ENCODE measurements at regions of chr5 and their contacts with region 1.

Region 1: DNA sequence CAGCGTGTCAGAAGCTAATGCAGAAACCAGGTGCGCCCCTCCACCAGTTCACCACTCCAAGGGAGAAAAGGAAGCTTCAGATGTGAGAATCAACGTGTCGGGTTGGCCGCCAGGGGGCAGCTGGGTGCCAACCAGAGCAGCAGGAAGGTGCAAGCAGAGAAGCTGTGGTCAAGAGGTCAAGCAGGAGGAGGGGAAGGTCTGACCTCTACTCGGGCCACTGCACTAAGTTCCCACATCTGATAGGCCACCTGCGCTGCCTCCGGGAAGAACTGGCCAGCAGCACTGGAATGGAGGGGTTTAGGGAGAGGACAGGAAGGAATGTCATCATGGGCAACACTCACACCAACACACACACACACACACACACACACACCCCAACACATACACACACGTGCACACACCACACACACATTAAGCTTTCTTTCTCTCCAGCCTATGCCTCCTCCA is 31.4 kb downstream of the ANXA6 start:
- DNase-seq: peak; percentile 34 to 82 (median 66)
- ATAC-seq: peak; percentile 37
- H3K4me3 ChIP-seq: no peak overlapping the region
- H3K4me3 Mint-ChIP-seq: no peak overlapping the region
- H3K27ac ChIP-seq: peak overlapping the region; percentile 12 to 54
- H3K27ac Mint-ChIP-seq: peak overlapping the region; percentile 92
- H3K4me1 ChIP-seq: peaks cover 41% of the 10 kb centered on the region
- H3K4me1 Mint-ChIP-seq: peaks cover 54% of the 10 kb centered on the region
- H3K27me3 ChIP-seq: no peaks in the 10 kb centered on the region
- H3K27me3 Mint-ChIP-seq: no peaks in the 10 kb centered on the region
- CTCF ChIP-seq: peak; percentile 78

Region 2: GRCh38 chr5:151094054-151094851 is 32.0 kb before region 1 on chr5:
- CTCF ChIA-PET with region 1: interaction called, 21 read pairs
- POLR2A ChIA-PET with region 1: interaction called, 4 read pairs
- intact Hi-C with region 1: no loop called
- DNase-seq: peak in 7 of 9 experiments; percentile 27 to 86 (median 53)
- ATAC-seq: peak; percentile 50
- H3K4me3 ChIP-seq: peak overlapping the region in 1 of 2 experiments; percentile 18
- H3K4me3 Mint-ChIP-seq: peak overlapping the region; percentile 52
- H3K27ac ChIP-seq: peak overlapping the region in 1 of 2 experiments; percentile 73
- H3K27ac Mint-ChIP-seq: peak overlapping the region; percentile 89
- H3K4me1 ChIP-seq: peaks cover 53% of the 10 kb centered on the region
- H3K4me1 Mint-ChIP-seq: peaks cover 70% of the 10 kb centered on the region
- H3K27me3 ChIP-seq: no peaks in the 10 kb centered on the region
- H3K27me3 Mint-ChIP-seq: no peaks in the 10 kb centered on the region
- CTCF ChIP-seq: no peak

Region 3: DNA sequence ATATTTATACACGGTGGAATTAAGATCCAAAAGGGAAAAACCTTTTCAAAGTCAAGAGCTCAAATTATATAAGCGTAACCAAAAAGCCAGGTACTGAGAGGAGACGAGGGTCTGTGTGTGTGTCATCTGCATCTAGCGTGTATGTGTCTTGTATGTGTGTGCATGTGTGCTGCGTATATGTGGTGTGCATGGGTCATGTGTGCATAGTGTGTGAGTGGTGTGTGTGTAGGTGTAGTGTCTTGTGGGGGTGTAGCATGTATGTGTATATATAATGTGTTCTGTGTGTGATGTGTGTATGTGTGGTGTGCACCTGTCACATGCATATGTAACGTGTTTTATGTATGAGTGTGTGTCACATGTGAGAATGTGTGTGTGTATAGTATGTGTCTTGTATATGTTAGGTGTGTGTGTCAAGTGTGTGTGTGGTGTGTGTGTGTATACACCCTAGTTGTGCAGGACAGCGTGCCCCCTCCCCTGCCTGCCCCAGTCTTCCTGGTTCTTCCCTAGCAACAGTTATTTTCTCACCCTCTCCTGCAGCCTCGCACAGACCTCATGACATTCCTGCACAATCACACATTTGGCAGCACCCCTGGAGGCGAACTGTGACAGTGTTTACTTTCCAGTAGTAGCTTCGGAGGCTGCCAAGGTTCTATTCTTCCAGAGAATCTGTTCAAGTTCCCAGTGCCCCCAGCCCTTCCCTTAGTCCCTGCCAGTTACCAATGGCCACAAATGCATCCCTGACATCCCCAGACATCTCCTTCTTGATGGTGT is 18.3 kb before region 1 on chr5:
- CTCF ChIA-PET with region 1: interaction called, 142 read pairs
- POLR2A ChIA-PET with region 1: no interaction called
- intact Hi-C with region 1: no loop called
- DNase-seq: no peak
- ATAC-seq: no peak
- H3K4me3 ChIP-seq: no peak overlapping the region
- H3K4me3 Mint-ChIP-seq: no peak overlapping the region
- H3K27ac ChIP-seq: no peak overlapping the region
- H3K27ac Mint-ChIP-seq: peak overlapping the region; percentile 69
- H3K4me1 ChIP-seq: no peaks in the 10 kb centered on the region
- H3K4me1 Mint-ChIP-seq: no peaks in the 10 kb centered on the region
- H3K27me3 ChIP-seq: no peaks in the 10 kb centered on the region
- H3K27me3 Mint-ChIP-seq: no peaks in the 10 kb centered on the region
- CTCF ChIP-seq: no peak

Region 4: DNA sequence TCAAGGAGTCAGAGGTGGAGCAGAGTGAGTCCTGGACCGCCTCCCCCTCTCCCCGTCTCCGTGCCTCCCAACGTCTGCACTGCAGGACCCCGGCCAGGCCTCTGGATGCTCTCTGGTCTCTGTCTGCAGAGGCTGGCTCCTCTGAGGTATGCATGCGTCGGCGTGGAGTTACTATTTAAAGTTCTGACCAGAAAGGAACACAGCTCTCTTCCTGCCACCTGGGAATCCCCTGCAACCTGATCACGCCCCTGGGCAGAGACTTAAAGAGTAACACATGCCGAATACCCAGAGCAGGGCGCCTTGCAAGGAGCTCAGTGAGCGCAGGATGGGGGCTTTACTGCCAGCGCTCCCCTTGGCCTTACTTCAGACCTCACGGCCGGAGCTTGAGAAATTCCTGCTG is 15.3 kb after region 1 on chr5:
- CTCF ChIA-PET with region 1: interaction called, 1,723 read pairs
- POLR2A ChIA-PET with region 1: interaction called, 15 read pairs
- intact Hi-C with region 1: loop called in 1 of 2 experiments (anchors 2 kb)
- DNase-seq: peak in 8 of 9 experiments; percentile 42 to 85 (median 69)
- ATAC-seq: peak; percentile 51
- H3K4me3 ChIP-seq: peak overlapping the region; percentile 10 to 43
- H3K4me3 Mint-ChIP-seq: peak overlapping the region; percentile 82
- H3K27ac ChIP-seq: peak overlapping the region; percentile 26 to 90
- H3K27ac Mint-ChIP-seq: peak overlapping the region; percentile 95
- H3K4me1 ChIP-seq: peaks cover 93% of the 10 kb centered on the region
- H3K4me1 Mint-ChIP-seq: peaks cover 98% of the 10 kb centered on the region
- H3K27me3 ChIP-seq: no peaks in the 10 kb centered on the region
- H3K27me3 Mint-ChIP-seq: no peaks in the 10 kb centered on the region
- CTCF ChIP-seq: no peak

Region 5: DNA sequence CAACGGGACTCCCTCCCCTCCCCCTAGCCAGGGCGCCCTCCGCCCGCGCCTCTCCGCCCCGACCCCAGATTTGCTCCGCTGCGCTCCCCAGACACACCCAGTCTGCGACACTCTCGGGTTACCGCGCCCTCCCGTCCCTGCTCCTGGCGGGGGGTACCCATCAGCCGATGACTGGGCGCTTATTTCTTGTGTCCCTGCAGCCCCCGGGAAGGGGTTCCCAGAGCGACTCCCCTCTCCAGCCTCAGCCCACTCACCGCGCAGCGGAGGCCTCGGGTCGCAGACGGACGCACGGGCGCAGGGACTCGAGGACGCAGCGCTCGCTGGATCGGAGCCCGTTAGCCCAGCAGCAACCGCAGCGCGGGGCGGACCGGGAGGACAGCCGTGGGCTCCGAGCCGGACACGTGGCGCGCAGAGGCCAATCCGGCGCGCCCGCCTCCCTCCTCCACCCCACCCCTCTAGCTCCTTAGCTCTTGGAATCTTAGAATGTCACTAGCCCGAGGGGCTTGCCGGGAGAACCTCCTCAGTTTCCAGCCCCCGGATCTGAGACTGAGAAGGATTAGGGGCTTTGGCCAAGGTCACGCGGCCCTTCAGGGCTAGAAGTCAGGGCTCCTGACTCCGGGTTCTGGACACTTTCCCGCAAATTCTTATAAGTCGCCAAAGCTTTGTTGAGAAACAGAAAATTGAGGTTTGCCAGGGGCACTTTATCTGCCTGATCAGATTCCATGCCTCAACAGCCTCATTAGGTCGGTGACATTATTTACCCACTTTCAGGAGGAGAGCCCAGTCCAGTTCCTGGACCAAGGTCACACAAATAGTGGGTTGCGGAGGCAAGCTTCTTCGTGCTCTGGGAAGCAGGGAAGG is 31.4 kb after region 1 on chr5 and contains the start of gene ANXA6:
- CTCF ChIA-PET with region 1: interaction called, 1,723 read pairs
- POLR2A ChIA-PET with region 1: interaction called, 13 read pairs
- intact Hi-C with region 1: no loop called
- DNase-seq: peak in 8 of 9 experiments; percentile 50 to 86 (median 66)
- ATAC-seq: peak; percentile 70
- H3K4me3 ChIP-seq: peak within 1 kb of the TSS; percentile 52 to 94
- H3K4me3 Mint-ChIP-seq: peak within 1 kb of the TSS; percentile 97
- H3K27ac ChIP-seq: peak within 1 kb of the TSS; percentile 68 to 90
- H3K27ac Mint-ChIP-seq: peak within 1 kb of the TSS; percentile 95
- H3K4me1 ChIP-seq: peaks cover 43% of the 10 kb centered on the region
- H3K4me1 Mint-ChIP-seq: peaks cover 65% of the 10 kb centered on the region
- H3K27me3 ChIP-seq: no peaks in the 10 kb centered on the region
- H3K27me3 Mint-ChIP-seq: no peaks in the 10 kb centered on the region
- CTCF ChIP-seq: no peak
- total RNA-seq, gene ANXA6: 83.5 to 89.4 TPM

Region 6: DNA sequence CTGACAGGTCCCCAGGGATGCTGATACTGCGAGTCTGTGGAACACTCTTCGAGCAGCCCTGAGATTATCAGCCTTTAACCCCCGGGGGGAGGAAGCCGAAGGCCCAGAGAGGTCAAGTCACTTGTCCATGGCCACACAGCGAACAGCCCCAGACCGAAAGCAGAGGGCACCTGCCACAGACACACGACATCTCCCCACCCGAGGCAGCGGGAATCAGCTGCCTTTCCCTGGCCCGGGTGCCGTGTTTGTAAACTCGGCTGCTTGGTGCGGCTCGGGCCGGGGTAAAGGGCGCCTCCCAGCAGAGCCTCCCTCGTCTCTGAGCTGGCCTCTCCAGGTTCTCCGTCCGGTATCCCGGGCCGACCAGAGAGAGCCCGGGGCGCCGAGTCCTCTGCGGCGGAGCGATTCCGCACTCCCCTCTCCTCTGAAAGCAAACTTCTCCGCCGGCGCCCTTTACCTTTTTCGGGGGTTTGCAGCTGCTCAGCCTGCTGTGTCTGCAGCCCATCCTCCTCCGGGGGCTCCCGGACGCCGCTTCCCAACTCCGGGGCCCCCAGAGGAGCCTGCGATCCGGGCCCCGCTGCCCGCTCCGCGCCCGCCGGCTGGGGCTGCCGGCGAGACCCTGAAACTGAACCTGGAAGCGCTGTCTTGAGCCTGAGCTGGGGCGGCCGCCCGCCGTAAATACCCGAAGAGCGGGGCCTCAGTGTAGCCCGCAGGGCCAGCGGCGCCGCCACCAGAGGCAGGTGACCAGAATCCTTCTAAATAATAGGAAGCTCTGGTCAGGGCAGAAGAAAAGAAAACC is 97.4 kb after region 1 on chr5 and contains the start of gene CCDC69:
- CTCF ChIA-PET with region 1: interaction called, 33 read pairs
- POLR2A ChIA-PET with region 1: interaction called, 5 read pairs
- intact Hi-C with region 1: no loop called
- DNase-seq: peak in 8 of 9 experiments; percentile 34 to 78 (median 58)
- ATAC-seq: peak; percentile 47
- H3K4me3 ChIP-seq: peak within 1 kb of the TSS; percentile 67 to 95
- H3K4me3 Mint-ChIP-seq: peak within 1 kb of the TSS; percentile 89
- H3K27ac ChIP-seq: peak within 1 kb of the TSS; percentile 69 to 86
- H3K27ac Mint-ChIP-seq: peak within 1 kb of the TSS; percentile 96
- H3K4me1 ChIP-seq: peaks cover 58% of the 10 kb centered on the region
- H3K4me1 Mint-ChIP-seq: peaks cover 58% of the 10 kb centered on the region
- H3K27me3 ChIP-seq: no peaks in the 10 kb centered on the region
- H3K27me3 Mint-ChIP-seq: no peaks in the 10 kb centered on the region
- CTCF ChIP-seq: no peak
- total RNA-seq, gene CCDC69: 96.3 to 98.5 TPM

Measured in CD8-positive, alpha-beta T cell (primary cell).